Natural killer cell (primary cell): ENCODE measurements at regions of chr5 and their contacts with region 1.

Region 1: GRCh38 chr5:166302166-166302565 is 1989.3 kb upstream of the WWC1 start:
- DNase-seq: no peak
- ATAC-seq: no peak
- H3K4me3 ChIP-seq: no peak overlapping the region
- H3K4me3 Mint-ChIP-seq: no peak overlapping the region
- H3K27ac ChIP-seq: no peak overlapping the region
- H3K27ac Mint-ChIP-seq: no peak overlapping the region
- H3K4me1 ChIP-seq: no peaks in the 10 kb centered on the region
- H3K4me1 Mint-ChIP-seq: no peaks in the 10 kb centered on the region
- H3K27me3 ChIP-seq: no peaks in the 10 kb centered on the region
- H3K27me3 Mint-ChIP-seq: no peaks in the 10 kb centered on the region
- CTCF ChIP-seq: no peak

Region 2: DNA sequence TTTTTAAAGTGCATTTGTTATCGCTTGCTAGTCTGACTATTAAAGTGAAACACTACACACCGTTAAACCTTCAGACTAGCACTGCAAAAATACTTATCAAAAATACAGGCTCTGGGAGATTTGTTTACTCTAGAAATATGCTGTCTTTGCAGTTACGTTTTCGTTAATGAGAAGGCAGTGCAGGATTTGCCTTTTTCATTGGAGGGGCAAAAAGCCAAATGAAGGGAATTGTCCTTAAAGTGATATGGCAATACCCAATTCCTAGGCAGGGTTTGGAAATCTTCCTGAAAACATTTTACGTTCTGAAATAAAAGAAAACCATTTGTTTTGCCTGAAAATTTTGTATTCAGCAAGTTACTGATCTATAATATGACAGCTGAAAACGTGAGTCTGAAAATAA is 996.6 kb before region 1 on chr5:
- intact Hi-C with region 1: loop called (anchors 5 kb)
- DNase-seq: no peak
- ATAC-seq: no peak
- H3K4me3 ChIP-seq: no peak overlapping the region
- H3K4me3 Mint-ChIP-seq: no peak overlapping the region
- H3K27ac ChIP-seq: no peak overlapping the region
- H3K27ac Mint-ChIP-seq: no peak overlapping the region
- H3K4me1 ChIP-seq: no peaks in the 10 kb centered on the region
- H3K4me1 Mint-ChIP-seq: no peaks in the 10 kb centered on the region
- H3K27me3 ChIP-seq: no peaks in the 10 kb centered on the region
- H3K27me3 Mint-ChIP-seq: no peaks in the 10 kb centered on the region
- CTCF ChIP-seq: no peak

Region 3: DNA sequence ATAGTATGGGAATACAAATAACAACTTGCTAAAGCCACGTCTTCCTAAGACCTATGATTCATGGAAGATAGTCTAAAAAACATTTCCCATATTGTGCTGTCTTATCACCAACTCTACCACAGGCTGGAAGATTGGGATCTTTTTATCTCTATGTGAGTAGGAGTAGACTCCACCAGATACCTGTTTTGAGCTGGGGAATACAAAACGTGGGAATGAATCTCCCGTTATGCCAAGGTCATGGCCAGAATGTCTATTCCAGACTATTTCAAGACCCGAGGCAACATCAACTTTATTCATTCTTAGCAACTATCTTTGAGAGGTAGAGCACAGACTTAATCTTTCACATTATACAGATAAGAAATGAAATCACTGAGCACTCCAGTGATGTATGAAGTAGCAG is 361.6 kb before region 1 on chr5:
- intact Hi-C with region 1: no loop called
- DNase-seq: no peak
- ATAC-seq: no peak
- H3K4me3 ChIP-seq: no peak overlapping the region
- H3K4me3 Mint-ChIP-seq: no peak overlapping the region
- H3K27ac ChIP-seq: no peak overlapping the region
- H3K27ac Mint-ChIP-seq: no peak overlapping the region
- H3K4me1 ChIP-seq: no peaks in the 10 kb centered on the region
- H3K4me1 Mint-ChIP-seq: no peaks in the 10 kb centered on the region
- H3K27me3 ChIP-seq: no peaks in the 10 kb centered on the region
- H3K27me3 Mint-ChIP-seq: no peaks in the 10 kb centered on the region
- CTCF ChIP-seq: no peak

Region 4: GRCh38 chr5:166267907-166268306 is 34.3 kb before region 1 on chr5:
- intact Hi-C with region 1: no loop called
- DNase-seq: no peak
- ATAC-seq: no peak
- H3K4me3 ChIP-seq: no peak overlapping the region
- H3K4me3 Mint-ChIP-seq: no peak overlapping the region
- H3K27ac ChIP-seq: no peak overlapping the region
- H3K27ac Mint-ChIP-seq: no peak overlapping the region
- H3K4me1 ChIP-seq: no peaks in the 10 kb centered on the region
- H3K4me1 Mint-ChIP-seq: no peaks in the 10 kb centered on the region
- H3K27me3 ChIP-seq: no peaks in the 10 kb centered on the region
- H3K27me3 Mint-ChIP-seq: no peaks in the 10 kb centered on the region
- CTCF ChIP-seq: no peak